ENCODE measurements at regions of chr5 and their contacts with region 1.

Region 1: DNA sequence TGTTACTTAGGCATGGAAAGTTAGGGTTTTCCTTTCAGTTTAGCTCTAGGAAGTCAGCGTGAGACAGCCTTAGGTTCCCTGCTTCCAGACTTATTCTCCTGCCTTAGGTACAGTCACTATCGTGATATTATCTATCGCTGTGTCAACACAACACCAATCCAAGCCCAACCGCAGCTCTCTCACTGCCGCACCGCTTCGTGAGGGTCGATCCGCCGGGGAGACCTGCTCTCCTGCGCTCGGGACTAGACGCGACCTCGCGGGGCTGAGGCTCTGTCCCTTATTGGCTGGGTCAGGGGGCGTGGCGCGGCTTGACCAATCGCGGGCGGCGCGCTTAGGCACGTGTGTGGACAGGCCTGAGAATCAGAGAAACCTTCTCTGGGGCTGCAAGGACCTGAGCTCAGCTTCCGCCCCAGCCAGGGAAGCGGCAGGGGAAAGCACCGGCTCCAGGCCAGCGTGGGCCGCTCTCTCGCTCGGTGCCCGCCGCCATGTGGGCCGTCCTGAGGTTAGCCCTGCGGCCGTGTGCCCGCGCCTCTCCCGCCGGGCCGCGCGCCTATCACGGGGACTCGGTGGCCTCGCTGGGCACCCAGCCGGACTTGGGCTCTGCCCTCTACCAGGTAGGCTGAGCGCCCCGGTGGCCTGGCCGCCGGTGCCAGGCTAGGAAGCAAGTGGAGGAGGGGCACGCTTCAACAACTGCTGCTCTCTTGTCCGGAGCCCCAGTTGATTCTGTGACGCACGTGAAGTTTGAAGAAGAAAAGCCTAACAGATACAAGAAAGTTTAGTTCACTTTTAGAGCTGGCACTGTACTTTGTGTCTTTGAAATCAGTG is at the start of gene MCCC2:
- DNase-seq: peak; percentile 98
- ATAC-seq: peak; percentile 99
- H3K4me3 Mint-ChIP-seq: peak within 1 kb of the TSS; percentile 80
- H3K27ac Mint-ChIP-seq: peak within 1 kb of the TSS; percentile 96
- H3K4me1 Mint-ChIP-seq: peaks cover 36% of the 10 kb centered on the region
- H3K27me3 Mint-ChIP-seq: no peaks in the 10 kb centered on the region
- total RNA-seq, gene MCCC2: 52.2 to 56.4 TPM

Region 2: DNA sequence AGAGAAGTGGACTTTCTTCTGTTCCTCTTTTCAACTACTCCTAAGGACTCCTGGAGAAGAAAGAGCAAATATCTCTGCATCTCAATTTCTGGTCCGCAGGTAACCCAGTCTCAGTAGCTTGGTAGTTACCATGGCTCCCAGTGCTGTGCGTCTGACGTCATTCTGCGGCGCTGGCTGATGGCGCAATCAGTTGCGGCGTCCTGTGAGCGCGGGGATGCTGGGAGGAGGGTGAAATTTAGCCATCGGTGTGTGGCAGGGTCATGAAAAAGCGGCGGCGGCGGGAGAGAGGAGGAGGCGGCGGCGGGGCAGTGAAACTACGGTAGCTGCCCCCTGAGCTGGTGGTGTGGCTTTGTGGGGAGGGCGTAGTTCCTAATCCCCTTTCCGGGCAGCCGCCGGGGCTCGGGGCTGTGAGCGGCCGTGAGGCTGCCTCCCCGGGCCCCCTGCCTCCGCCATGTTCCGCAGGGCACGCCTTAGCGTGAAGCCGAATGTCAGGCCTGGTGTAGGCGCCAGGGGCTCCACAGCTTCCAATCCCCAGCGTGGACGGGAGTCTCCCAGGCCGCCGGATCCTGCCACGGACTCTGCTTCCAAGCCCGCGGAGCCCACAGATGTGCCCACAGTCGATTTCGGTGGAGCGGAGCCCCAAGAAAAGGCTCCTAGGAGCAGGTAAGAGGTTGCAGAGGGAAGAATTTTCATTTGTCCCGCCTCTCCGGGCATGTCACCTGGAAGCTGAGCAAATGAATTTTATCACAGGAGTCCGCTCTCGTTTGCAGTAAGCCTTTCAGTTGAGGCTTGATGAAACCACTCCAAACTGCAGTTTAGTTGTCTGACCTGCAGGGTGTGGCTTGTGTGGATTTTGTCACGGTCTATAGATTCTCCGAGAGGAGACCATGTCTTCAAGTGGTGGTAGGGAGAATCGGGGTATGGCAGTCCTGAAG is 131.5 kb before region 1 on chr5 and contains the start of gene BDP1:
- CTCF ChIA-PET with region 1: no interaction called
- POLR2A ChIA-PET with region 1: no interaction called
- intact Hi-C with region 1: loop called (anchors 1 to 2 kb)
- DNase-seq: peak; percentile 99
- ATAC-seq: peak; percentile 93
- H3K4me3 Mint-ChIP-seq: peak within 1 kb of the TSS; percentile 93
- H3K27ac Mint-ChIP-seq: peak within 1 kb of the TSS; percentile 99
- H3K4me1 Mint-ChIP-seq: peaks cover 20% of the 10 kb centered on the region
- H3K27me3 Mint-ChIP-seq: peaks cover 6% of the 10 kb centered on the region
- total RNA-seq, gene BDP1: 27.2 to 30.1 TPM

Region 3: GRCh38 chr5:71601222-71602041 is 14.3 kb after region 1 on chr5:
- CTCF ChIA-PET with region 1: interaction called, 32 read pairs
- POLR2A ChIA-PET with region 1: interaction called, 19 read pairs
- intact Hi-C with region 1: loop called (anchors 1 kb)
- DNase-seq: peak; percentile 87
- ATAC-seq: peak; percentile 92
- H3K4me3 Mint-ChIP-seq: peak overlapping the region; percentile 17
- H3K27ac Mint-ChIP-seq: peak overlapping the region; percentile 93
- H3K4me1 Mint-ChIP-seq: peaks cover 33% of the 10 kb centered on the region
- H3K27me3 Mint-ChIP-seq: no peaks in the 10 kb centered on the region

Region 4: GRCh38 chr5:73498057-73499008 is 1911.2 kb after region 1 on chr5 and contains the start of gene BTF3:
- CTCF ChIA-PET with region 1: no interaction called
- POLR2A ChIA-PET with region 1: no interaction called
- intact Hi-C with region 1: loop called in 1 of 2 experiments (anchors 5 kb)
- DNase-seq: peak; percentile 96
- ATAC-seq: peak; percentile 95
- H3K4me3 Mint-ChIP-seq: peak within 1 kb of the TSS; percentile 87
- H3K27ac Mint-ChIP-seq: peak within 1 kb of the TSS; percentile 98
- H3K4me1 Mint-ChIP-seq: peaks cover 35% of the 10 kb centered on the region
- H3K27me3 Mint-ChIP-seq: peaks cover 2% of the 10 kb centered on the region
- total RNA-seq, gene BTF3: 1,030 to 1,213 TPM

Measured in activated CD4-positive, alpha-beta T cell treated with anti-CD3 and anti-CD28 coated beads for 36 hours (primary cell).